Gastrocnemius medialis (tissue), 4 donors: ENCODE measurements at regions of chr3 and their contacts with region 1.

Region 1: GRCh38 chr3:99970198-99970597 is 144.1 kb downstream of the FILIP1L start:
- DNase-seq: no peak
- ATAC-seq: no peak
- H3K4me3 ChIP-seq: no peak overlapping the region
- H3K27ac ChIP-seq: peak overlapping the region; percentile 75 to 84 (median 81)
- H3K4me1 ChIP-seq: peaks cover 75 to 82% of the 10 kb centered on the region in 2 donors
- H3K27me3 ChIP-seq: no peaks in the 10 kb centered on the region
- CTCF ChIP-seq: no peak
- POLR2A ChIP-seq: no peak

Region 2: DNA sequence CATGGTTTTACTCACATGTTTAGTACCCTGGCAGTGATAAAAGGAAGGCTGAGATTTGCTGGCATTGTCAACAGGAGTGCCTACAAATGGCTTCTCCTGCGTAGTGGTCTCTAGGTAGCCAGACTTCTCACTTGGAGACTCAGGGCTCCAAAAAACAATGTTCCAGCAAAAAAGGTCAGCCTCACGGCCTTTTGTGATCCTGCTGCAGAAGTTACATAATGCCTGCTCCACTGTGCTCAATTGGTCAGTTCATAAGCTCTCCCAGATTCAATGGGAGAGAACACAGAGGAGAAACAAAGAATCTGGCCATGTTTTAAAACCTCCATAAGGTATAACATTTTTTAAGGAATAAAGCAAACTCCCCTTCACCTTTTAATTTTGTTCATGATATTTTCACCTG is 228.6 kb before region 1 on chr3:
- in situ Hi-C with region 1: no loop called
- intact Hi-C with region 1: no loop called
- DNase-seq: no peak
- ATAC-seq: no peak
- H3K4me3 ChIP-seq: no peak overlapping the region
- H3K27ac ChIP-seq: no peak overlapping the region
- H3K4me1 ChIP-seq: no peaks in the 10 kb centered on the region
- H3K27me3 ChIP-seq: no peaks in the 10 kb centered on the region
- CTCF ChIP-seq: no peak
- POLR2A ChIP-seq: no peak

Region 3: GRCh38 chr3:100029689-100030088 is 59.5 kb after region 1 on chr3:
- in situ Hi-C with region 1: no loop called
- intact Hi-C with region 1: loop called (anchors 5 kb)
- DNase-seq: no peak
- ATAC-seq: no peak
- H3K4me3 ChIP-seq: no peak overlapping the region
- H3K27ac ChIP-seq: peak overlapping the region; percentile 73 to 87 (median 81)
- H3K4me1 ChIP-seq: peaks cover 56 to 65% of the 10 kb centered on the region in 2 donors
- H3K27me3 ChIP-seq: no peaks in the 10 kb centered on the region
- CTCF ChIP-seq: no peak
- POLR2A ChIP-seq: no peak

Region 4: DNA sequence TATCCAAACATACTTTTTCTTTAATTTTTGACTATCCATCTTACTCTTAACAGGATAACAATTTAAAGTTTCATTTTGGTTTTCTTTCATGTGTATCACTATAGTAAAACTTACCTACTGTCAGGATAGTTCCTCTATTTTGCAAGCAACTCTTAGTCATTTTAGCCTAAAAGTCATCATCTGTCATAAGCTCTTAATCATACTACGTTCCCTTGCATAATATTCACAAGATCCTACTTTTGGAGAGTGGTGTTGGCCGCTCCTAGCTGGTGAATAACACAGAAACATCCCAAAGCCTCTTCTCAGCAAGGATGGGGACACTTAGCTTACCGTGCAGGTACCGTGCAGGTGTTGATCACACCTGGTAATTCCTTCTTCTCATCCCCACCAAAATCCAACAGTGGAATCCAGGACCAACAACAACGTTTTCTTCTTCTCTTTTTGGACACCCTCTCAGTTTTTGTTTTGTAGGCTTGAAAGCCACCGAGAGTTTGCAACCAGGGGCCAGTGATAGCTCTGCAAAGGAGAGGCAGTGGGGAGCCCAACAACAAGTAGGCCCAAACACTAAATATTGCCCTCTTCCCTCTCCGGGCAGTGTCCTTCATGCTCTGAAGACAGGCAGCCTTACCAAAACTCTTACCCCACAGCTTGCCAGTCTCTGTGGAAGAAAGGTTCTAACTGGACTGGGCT is 143.7 kb after region 1 on chr3:
- in situ Hi-C with region 1: no loop called
- intact Hi-C with region 1: loop called (anchors 5 kb)
- DNase-seq: no peak
- ATAC-seq: peak; percentile 16 to 48
- H3K4me3 ChIP-seq: peak overlapping the region; percentile 26 to 46 (median 34)
- H3K27ac ChIP-seq: peak overlapping the region; percentile 84 to 92 (median 86)
- H3K4me1 ChIP-seq: peaks cover 34 to 56% of the 10 kb centered on the region in 2 donors
- H3K27me3 ChIP-seq: no peaks in the 10 kb centered on the region
- CTCF ChIP-seq: no peak
- POLR2A ChIP-seq: no peak

Region 5: DNA sequence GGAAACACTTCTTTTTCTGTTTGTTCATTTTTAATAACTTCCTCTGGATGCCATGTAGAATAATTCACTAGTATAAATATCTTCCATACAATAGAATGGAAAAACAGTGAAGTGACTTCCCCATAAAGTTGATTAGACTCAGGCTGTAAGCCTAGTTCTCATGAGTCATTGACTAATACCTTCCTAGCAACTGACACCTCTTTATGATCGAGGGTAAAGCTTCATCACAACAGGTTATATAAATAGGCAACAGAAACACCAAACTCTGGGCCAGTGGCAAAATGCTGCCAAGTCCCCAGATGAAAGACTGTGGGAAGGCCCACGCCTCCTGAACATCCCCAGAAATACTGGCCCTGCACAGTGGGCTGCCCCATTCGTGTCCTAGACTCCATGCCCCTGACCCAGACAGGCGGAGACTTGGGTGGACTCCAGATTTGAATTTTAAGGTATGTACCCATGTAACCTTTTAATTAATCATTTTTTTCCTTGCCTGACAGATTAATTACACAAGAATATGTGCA is 219.3 kb after region 1 on chr3:
- in situ Hi-C with region 1: no loop called
- intact Hi-C with region 1: no loop called
- DNase-seq: no peak
- ATAC-seq: peak; percentile 42 to 82
- H3K4me3 ChIP-seq: no peak overlapping the region
- H3K27ac ChIP-seq: no peak overlapping the region
- H3K4me1 ChIP-seq: peaks cover 22 to 25% of the 10 kb centered on the region in 2 donors
- H3K27me3 ChIP-seq: no peaks in the 10 kb centered on the region
- CTCF ChIP-seq: no peak
- POLR2A ChIP-seq: no peak